Ascending aorta (tissue), 2 donors: ENCODE measurements at regions of chr12 and their contacts with region 1.

Region 1: GRCh38 chr12:131912518-131913294 is 16.4 kb upstream of the PUS1 start:
- DNase-seq: peak; percentile 63 to 94
- H3K4me3 ChIP-seq: no peak overlapping the region
- H3K27ac ChIP-seq: peak overlapping the region; percentile 9 to 66
- H3K4me1 ChIP-seq: peaks cover 4 to 10% of the 10 kb centered on the region in 2 donors
- H3K27me3 ChIP-seq: no peaks in the 10 kb centered on the region
- CTCF ChIP-seq: no peak

Region 2: DNA sequence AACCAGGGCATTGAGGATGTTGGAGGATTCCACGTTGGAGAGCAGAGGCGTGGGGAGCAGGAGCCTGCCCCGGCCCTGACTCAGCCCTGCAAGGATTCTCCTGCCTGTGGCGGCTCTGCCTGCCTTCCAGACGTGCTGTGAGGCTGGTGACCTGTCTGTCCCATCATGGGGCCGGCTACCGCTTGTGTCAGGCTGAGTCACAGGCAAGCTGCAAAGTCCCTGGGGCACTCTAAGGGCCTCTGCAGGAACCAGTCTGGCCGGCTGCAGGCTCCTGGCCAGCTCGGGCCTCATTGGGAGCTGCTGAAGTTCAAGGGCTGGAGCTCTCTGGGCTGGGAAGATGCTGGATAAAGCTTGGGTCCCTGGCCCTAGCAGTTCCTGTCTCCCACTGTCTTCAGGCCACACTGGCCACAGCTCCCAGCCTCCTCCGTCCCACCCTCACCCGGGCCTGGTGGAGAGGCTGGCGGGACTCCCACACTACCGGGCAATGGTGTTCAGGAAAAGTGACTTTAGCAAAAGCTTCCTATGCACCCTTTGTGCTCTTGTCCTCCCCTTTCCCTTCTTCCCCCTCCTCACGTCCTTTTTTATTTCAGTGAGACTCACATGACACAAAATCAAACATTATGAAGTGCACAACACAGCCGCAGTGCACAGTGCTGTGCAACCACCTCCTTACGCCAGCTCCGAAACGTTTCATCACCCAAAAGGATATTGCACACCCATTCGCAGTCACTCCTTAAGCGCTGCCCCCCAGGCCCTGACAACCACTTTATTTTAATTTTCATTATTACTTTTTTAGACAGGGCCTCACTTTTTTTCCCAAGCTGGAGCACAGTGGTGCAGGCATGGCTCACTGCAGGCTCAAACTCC is 40.3 kb before region 1 on chr12:
- intact Hi-C with region 1: no loop called
- DNase-seq: no peak
- H3K4me3 ChIP-seq: no peak overlapping the region
- H3K27ac ChIP-seq: no peak overlapping the region
- H3K4me1 ChIP-seq: no peaks in the 10 kb centered on the region
- H3K27me3 ChIP-seq: no peaks in the 10 kb centered on the region
- CTCF ChIP-seq: no peak

Region 3: DNA sequence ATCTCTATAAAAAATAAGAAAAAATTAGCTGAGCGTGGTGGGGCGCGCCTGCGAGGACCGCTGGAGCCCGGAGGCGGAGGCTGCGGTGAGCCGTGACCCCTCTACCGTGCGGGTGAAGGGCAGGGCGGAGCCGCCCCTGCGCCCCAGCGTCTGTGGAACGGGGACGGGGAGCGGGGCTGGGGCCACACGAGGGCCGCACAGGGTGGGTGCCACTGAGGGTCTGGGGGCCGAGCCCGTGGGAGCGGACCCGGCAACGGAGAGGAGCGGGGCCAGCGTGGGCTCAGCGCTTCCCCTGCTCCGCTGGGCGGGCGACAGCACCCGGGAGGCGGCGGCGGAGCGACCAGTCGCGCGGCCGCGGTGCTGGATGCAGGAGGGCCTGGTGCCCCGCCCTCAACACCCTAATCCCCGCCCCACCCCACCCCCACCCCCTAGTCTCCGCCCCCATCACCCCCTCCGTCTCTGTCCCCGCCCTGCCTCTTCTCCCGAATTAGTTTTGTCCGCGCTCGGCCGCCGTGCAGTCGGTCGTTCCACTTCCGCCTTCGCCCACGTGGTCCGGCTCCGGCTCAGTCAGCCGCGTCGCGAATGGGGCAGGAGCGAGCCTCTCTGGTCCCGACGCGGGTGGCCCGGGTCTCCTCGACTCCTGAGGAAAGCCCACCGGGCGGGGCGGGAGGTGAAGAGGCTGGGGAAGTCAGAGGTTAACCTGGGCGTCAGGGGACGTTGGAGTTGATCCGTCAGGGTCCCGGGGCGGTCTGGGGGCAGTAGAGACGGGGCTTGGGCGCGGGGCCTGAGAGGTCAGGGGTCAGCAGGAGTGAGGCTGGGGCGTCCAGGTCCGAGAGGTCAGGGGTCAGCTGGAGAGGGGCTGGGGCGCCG is 16.2 kb after region 1 on chr12 and contains the start of gene PUS1:
- intact Hi-C with region 1: loop called (anchors 2 kb)
- DNase-seq: peak; percentile 67 to 95
- H3K4me3 ChIP-seq: peak within 1 kb of the TSS; percentile 58 to 80
- H3K27ac ChIP-seq: peak within 1 kb of the TSS; percentile 70 to 74
- H3K4me1 ChIP-seq: peaks cover 8 to 12% of the 10 kb centered on the region in 2 donors
- H3K27me3 ChIP-seq: no peaks in the 10 kb centered on the region
- CTCF ChIP-seq: no peak
- total RNA-seq, gene PUS1: 22.7 TPM